Naive thymus-derived CD4-positive, alpha-beta T cell (primary cell): ENCODE measurements at regions of chr1 and their contacts with region 1.

Region 1: GRCh38 chr1:197356723-197357533 is 88.9 kb downstream of the CRB1 start:
- DNase-seq: peak in 5 of 9 donors; percentile 19 to 36 (median 25)
- ATAC-seq: peak; percentile 68
- H3K4me3 ChIP-seq: no peak overlapping the region
- H3K4me3 Mint-ChIP-seq: no peak overlapping the region
- H3K27ac ChIP-seq: no peak overlapping the region
- H3K27ac Mint-ChIP-seq: no peak overlapping the region
- H3K4me1 ChIP-seq: no peaks in the 10 kb centered on the region
- H3K4me1 Mint-ChIP-seq: peaks cover 0 to 3% (median 0%) of the 10 kb centered on the region in 7 donors
- H3K27me3 ChIP-seq: no peaks in the 10 kb centered on the region
- H3K27me3 Mint-ChIP-seq: no peaks in the 10 kb centered on the region

Region 2: DNA sequence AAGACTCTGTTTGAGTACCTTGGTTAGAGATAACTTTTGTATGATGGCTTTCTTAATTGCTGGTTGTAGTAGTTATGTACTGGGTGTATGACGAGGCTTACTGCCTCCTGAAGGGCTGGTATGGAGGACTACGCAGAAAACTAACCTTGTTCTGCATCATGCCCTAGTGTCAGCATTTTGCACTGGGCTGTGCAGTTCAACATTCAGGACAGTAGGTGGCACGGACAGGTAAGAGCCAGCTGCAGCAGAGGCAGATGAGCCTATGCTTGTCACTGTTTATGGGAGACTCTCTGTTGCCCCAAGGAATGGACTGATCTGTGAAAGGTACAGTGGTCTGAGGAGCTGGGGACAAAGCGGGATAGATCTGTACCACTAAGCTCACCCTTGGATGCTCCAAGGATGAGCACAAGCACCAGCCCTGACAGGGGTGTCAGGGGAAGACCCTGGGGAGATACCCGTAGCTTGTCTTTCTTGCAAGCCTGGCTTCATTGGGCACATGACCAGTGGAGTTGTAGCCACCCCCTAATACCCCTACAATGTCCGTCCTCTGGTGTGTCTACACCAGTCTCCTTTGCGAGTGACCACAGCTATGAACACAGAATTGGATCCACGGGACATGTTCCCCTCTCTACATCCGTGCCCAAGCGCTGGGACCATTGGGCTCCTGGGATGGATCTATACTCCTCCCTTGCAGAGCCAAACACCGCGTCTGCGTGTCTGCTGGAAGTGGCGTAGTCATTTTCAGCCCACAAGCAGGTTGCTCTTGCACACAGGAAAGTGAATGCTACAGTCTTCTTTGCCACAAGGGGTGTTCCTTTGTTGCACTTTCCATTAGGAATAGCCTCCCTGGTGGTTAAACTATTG is 633.4 kb before region 1 on chr1:
- CTCF ChIA-PET with region 1: no interaction called
- POLR2A ChIA-PET with region 1: no interaction called
- intact Hi-C with region 1: loop called (anchors 1 to 2 kb)
- DNase-seq: peak in 4 of 9 donors; percentile 7 to 44 (median 28)
- ATAC-seq: peak; percentile 47
- H3K4me3 ChIP-seq: no peak overlapping the region
- H3K4me3 Mint-ChIP-seq: no peak overlapping the region
- H3K27ac ChIP-seq: no peak overlapping the region
- H3K27ac Mint-ChIP-seq: no peak overlapping the region
- H3K4me1 ChIP-seq: no peaks in the 10 kb centered on the region
- H3K4me1 Mint-ChIP-seq: no peaks in the 10 kb centered on the region
- H3K27me3 ChIP-seq: no peaks in the 10 kb centered on the region
- H3K27me3 Mint-ChIP-seq: peaks cover 0 to 6% (median 1%) of the 10 kb centered on the region in 5 donors